ENCODE measurements at regions of chr14 and their contacts with region 1.

Region 1: DNA sequence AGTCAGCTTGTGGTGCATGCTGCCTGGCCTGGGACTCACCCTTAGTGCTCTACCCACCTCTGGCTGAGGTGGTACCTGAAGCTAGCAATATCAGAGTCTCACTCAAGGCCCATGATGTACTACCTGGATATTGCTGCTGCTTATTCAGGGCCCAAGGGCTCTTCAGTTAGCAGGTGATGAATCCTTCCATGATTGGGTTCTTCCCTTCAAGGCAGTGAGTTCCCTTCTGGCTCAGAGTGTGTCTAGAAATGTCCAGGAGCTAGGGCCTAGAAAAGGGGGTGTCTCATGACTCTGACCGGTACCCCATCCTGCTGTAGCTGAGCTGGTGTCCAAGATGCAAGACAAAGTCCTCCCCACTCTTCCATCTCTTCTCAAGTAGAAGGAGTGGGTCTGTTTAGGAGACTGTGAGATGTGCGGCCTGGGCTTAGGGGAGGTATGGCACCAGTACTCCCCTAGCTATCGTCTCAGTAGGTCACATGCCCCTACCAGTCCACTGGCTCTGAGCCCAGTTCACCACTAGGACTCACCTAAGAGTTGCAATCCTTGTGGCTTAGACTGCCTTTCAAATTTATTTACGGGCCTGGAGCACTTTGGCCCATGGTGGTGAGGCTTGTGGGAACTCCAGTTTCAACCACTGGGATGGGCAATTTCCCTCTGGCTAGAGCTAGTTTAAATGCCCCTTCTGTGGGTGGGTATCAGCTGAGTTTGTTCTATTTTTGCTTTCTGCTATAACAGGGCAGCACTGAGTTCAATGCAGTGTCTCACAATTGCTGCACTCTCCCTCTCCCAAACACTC is 12.2 kb downstream of the PRORP start:
- DNase-seq: no peak
- H3K4me3 ChIP-seq: no peak overlapping the region
- H3K4me3 Mint-ChIP-seq: no peak overlapping the region
- H3K27ac Mint-ChIP-seq: no peak overlapping the region
- H3K4me1 ChIP-seq: no peaks in the 10 kb centered on the region
- H3K4me1 Mint-ChIP-seq: no peaks in the 10 kb centered on the region
- H3K27me3 ChIP-seq: no peaks in the 10 kb centered on the region
- H3K27me3 Mint-ChIP-seq: no peaks in the 10 kb centered on the region
- CTCF ChIP-seq: no peak

Region 2: DNA sequence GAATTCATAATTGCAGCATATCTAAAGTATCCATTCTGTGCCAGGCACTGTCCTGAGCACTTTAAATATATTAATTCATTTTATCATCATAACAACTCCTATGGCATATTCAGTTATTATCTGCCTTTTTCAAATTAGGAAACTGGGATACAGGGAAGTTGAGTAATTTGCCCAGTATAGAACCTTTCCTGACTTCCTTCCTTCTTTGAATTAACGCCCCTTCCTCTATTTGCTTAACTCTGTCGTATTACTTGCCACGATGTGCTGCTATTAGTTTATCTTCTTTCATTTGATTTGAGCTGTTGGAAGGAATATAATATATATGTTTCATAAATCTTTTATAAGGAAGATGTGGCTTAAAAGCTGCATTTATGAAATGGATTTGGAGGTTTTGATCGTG is 113.8 kb before region 1 on chr14:
- CTCF ChIA-PET with region 1: no interaction called
- POLR2A ChIA-PET with region 1: no interaction called
- intact Hi-C with region 1: no loop called
- DNase-seq: no peak
- H3K4me3 ChIP-seq: no peak overlapping the region
- H3K4me3 Mint-ChIP-seq: no peak overlapping the region
- H3K27ac Mint-ChIP-seq: no peak overlapping the region
- H3K4me1 ChIP-seq: no peaks in the 10 kb centered on the region
- H3K4me1 Mint-ChIP-seq: no peaks in the 10 kb centered on the region
- H3K27me3 ChIP-seq: no peaks in the 10 kb centered on the region
- H3K27me3 Mint-ChIP-seq: no peaks in the 10 kb centered on the region
- CTCF ChIP-seq: no peak

Region 3: DNA sequence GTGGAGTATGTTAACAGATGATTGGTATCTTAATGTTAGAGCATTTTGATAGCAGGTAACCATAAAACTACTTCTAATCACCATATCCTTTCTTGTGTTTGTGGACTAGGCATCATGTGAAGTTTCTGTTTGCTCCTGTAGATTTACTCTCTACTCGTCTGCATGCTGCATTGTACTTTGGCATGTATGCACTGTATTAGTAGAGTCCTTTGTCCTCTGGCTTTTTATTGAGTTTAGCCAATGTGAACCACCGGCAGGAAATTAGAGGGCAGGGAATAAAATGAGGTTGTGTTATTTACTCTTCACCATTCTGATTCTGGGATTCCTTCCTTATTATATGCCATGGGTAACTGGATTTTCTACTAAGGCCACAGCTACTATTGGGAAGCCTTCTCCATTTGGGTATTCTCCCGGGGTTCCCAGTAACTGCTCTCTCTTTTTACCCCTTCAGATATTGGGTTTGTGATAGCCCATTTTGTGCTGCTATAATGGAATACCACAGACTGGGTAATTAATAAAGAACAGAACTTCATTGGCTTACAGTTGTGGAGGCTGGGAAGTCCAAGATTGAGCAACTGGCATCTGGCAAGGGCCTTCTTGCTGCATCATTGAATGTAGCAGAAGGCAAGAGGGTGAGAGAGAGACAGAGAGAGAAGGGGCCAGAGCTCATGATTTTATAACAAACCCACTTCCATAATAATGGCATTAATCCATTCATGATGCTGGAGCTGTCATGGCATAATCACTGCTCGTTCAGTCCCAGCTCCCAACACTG is 66.1 kb before region 1 on chr14:
- CTCF ChIA-PET with region 1: no interaction called
- POLR2A ChIA-PET with region 1: interaction called, 10 read pairs
- intact Hi-C with region 1: no loop called
- DNase-seq: no peak
- H3K4me3 ChIP-seq: no peak overlapping the region
- H3K4me3 Mint-ChIP-seq: no peak overlapping the region
- H3K27ac Mint-ChIP-seq: no peak overlapping the region
- H3K4me1 ChIP-seq: no peaks in the 10 kb centered on the region
- H3K4me1 Mint-ChIP-seq: no peaks in the 10 kb centered on the region
- H3K27me3 ChIP-seq: no peaks in the 10 kb centered on the region
- H3K27me3 Mint-ChIP-seq: no peaks in the 10 kb centered on the region
- CTCF ChIP-seq: no peak